ENCODE measurements at regions of chr7 and their contacts with region 1.

Region 1: GRCh38 chr7:138738551-138739335 is 37.6 kb upstream of the SVOPL start:
- DNase-seq: peak; percentile 74
- H3K4me3 ChIP-seq: no peak overlapping the region
- H3K27ac ChIP-seq: no peak overlapping the region
- H3K4me1 ChIP-seq: peaks cover 16% of the 10 kb centered on the region
- H3K27me3 ChIP-seq: no peaks in the 10 kb centered on the region
- CTCF ChIP-seq: peak; percentile 92 to 98

Region 2: DNA sequence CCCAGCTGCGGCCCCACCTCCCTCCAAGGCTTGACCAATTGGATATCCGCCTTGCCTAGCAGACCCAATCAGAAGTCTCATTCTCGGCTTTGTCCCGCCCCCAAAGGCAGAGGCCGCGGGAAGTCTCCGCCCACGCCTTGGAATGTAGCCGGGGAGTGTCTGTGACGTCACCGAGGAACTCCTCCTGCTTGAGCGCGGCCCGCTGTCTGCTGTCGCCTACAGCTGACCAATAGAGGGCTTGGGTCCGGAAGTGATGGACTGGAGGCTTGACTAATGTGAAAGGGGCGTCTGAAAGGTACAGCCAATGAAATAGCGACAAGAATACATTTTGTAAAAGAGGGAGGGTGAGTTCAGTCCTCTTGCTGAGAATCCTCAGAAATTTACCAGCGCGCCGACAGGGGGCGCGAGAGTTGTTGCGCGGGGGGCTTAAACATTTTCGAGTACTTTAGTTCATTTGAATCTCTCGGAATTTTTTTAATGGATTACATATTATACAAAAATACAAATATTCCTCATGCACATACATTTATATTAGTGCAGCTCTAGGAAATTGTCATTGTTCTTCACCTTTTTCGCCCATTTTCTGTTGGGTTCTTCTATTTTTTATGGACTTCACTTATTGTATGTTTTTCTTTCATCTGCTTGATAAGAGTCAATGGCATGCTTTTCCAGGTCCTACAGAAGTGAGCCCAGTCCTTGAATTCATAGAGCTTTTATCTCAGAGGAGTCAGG is 736.5 kb before region 1 on chr7:
- CTCF ChIA-PET with region 1: no interaction called
- dilution Hi-C with region 1: no loop called
- in situ Hi-C with region 1: loop called in 1 of 2 experiments (anchors 25 kb)
- intact Hi-C with region 1: no loop called
- DNase-seq: peak; percentile 100
- H3K4me3 ChIP-seq: peak overlapping the region; percentile 91 to 98 (median 94)
- H3K27ac ChIP-seq: peak overlapping the region; percentile 87
- H3K4me1 ChIP-seq: peaks cover 25% of the 10 kb centered on the region
- H3K27me3 ChIP-seq: no peaks in the 10 kb centered on the region
- CTCF ChIP-seq: peak; percentile 79 to 81

Region 3: DNA sequence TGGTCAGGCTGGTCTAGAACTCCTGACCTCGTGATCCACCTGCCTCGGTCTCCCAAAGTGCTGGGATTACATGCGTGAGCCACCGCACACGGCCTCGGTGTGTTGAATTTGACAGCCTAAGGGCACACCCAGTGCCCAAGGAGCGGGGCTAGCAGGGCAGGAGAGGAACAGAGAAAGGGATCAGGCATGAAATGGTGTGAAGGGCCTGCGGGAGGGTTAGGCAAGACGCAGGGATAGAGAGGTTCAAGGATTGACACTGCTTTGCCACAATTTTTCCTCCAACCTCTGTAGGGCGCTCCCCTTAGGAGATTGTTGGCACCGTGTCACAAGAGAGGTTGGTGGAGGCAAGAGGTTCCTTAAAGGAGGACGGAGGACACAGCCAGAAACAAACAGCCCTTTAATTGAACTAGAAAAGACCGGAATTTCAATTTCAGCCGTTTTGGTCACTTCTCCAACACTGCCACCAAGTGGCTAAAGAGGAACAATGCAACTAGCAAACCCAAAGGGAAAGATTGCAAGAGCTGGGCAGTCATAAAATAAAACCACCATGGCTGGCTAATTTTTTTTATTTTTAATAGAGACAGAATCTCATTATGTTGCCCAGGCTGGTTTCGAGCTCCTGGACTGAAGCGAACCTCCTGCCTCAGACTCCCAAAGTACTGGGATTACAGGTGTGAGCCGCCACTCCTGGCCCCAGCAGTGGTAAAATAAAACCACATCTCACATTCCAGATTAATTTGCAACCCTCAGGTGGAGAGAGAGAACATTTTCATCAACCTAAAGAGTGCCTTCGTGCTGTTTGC is 730.0 kb before region 1 on chr7:
- CTCF ChIA-PET with region 1: no interaction called
- dilution Hi-C with region 1: no loop called
- in situ Hi-C with region 1: loop called in 1 of 2 experiments (anchors 25 kb)
- intact Hi-C with region 1: loop called (anchors 1 kb)
- DNase-seq: peak; percentile 53
- H3K4me3 ChIP-seq: no peak overlapping the region
- H3K27ac ChIP-seq: no peak overlapping the region
- H3K4me1 ChIP-seq: no peaks in the 10 kb centered on the region
- H3K27me3 ChIP-seq: no peaks in the 10 kb centered on the region
- CTCF ChIP-seq: peak; percentile 69 to 86

Region 4: DNA sequence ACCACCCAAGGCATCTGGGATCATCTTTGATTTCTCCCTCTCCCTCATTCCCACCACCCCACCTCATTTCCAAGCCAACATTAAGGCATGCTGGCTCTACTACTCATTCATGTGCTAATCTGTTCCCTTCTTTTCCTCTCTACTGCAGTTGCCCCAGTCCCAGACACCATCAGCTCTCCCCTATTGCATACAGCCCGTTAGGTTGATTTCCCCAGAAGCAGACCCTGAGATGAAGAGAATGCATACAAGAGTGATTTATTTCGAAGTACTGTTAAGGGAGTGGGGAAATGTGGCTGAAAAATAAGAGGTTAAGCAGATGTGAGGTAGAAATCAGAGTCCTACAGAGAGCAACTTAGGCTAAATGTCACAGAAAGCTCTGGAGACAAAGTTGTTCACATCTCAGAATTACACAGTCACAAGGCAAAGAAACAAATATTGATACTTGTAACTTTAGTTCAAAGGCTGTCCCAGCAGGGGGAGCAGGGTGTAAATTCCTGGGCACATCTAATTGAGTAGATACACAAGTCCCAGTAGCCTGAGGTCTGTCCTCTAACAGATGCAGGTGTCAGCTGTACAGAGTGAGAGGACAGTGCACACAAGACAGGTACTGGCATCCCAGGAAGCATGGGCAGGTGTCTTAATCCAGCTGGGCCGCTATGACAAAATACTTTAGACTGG is 641.5 kb before region 1 on chr7:
- CTCF ChIA-PET with region 1: no interaction called
- dilution Hi-C with region 1: no loop called
- in situ Hi-C with region 1: no loop called
- intact Hi-C with region 1: loop called (anchors 1 kb)
- DNase-seq: peak; percentile 29
- H3K4me3 ChIP-seq: no peak overlapping the region
- H3K27ac ChIP-seq: no peak overlapping the region
- H3K4me1 ChIP-seq: no peaks in the 10 kb centered on the region
- H3K27me3 ChIP-seq: no peaks in the 10 kb centered on the region
- CTCF ChIP-seq: peak; percentile 47 to 57

Region 5: GRCh38 chr7:138161600-138162081 is 577.1 kb before region 1 on chr7:
- CTCF ChIA-PET with region 1: interaction called, 28 read pairs
- dilution Hi-C with region 1: no loop called
- in situ Hi-C with region 1: loop called (anchors 10 to 25 kb)
- intact Hi-C with region 1: loop called (anchors 1 kb)
- DNase-seq: peak; percentile 77
- H3K4me3 ChIP-seq: no peak overlapping the region
- H3K27ac ChIP-seq: no peak overlapping the region
- H3K4me1 ChIP-seq: no peaks in the 10 kb centered on the region
- H3K27me3 ChIP-seq: no peaks in the 10 kb centered on the region
- CTCF ChIP-seq: peak; percentile 55 to 87

Region 6: DNA sequence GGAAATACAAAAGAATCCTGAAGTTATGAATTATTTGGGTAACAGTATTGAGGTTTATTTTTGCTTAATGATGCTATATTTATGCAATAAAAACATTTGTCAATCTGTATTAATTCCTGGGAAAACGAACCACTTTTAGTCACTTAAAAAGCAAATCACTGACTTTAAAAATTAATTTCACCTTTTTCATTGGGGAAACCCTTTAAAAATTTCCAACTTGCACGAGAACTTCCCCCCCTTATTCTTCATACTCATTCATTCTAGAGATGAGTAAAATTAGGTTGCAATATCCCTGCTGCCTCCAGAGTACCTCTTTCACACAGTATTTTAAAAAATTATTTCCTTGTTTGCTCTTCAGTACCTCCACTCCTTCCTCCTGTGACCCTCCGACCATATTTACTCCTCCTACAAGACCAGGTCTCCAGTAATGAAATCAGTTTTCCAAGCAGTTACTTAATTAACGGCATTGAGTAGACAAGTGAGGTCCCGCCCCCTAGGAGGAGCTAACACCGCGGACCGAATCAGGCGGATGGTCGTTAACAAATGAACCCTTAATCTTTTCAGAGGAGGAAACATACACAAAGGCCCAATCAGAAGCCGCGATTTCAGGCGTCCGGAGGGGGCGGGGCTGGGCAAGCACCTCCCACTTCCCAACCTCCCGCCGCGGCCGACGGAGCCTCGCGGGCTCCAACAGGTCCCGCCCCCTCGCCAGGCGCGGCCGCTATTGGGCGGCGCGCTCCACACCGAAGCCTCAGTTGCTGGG is 279.1 kb before region 1 on chr7:
- CTCF ChIA-PET with region 1: no interaction called
- dilution Hi-C with region 1: no loop called
- in situ Hi-C with region 1: no loop called
- intact Hi-C with region 1: loop called (anchors 1 kb)
- DNase-seq: peak; percentile 97
- H3K4me3 ChIP-seq: peak overlapping the region; percentile 42 to 51 (median 50)
- H3K27ac ChIP-seq: no peak overlapping the region
- H3K4me1 ChIP-seq: peaks cover 7% of the 10 kb centered on the region
- H3K27me3 ChIP-seq: no peaks in the 10 kb centered on the region
- CTCF ChIP-seq: no peak

Region 7: DNA sequence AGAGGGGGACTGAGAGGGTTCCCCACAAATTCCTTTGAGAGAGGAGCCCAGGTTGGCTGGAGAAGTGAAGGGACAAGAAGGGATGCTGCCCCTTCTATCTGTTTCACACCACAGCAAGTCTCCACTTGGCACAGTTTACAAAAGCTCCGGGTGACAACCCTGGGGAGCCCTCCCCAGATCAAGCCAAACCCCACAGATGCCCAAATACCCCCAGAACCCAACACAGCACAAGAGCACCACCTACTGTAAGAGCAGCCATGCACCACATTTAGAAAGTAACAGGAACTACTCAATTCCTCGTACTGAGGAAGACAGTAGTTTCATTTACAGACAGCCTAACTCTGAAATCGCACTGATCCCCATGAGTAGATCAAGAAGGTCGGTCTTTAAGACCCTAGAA is 127.1 kb after region 1 on chr7:
- CTCF ChIA-PET with region 1: no interaction called
- dilution Hi-C with region 1: no loop called
- in situ Hi-C with region 1: no loop called
- intact Hi-C with region 1: loop called (anchors 5 kb)
- DNase-seq: no peak
- H3K4me3 ChIP-seq: no peak overlapping the region
- H3K27ac ChIP-seq: no peak overlapping the region
- H3K4me1 ChIP-seq: peaks cover 7% of the 10 kb centered on the region
- H3K27me3 ChIP-seq: no peaks in the 10 kb centered on the region
- CTCF ChIP-seq: peak; percentile 37 to 69

Region 8: GRCh38 chr7:139340037-139340807 is 601.5 kb after region 1 on chr7:
- CTCF ChIA-PET with region 1: no interaction called
- dilution Hi-C with region 1: no loop called
- in situ Hi-C with region 1: no loop called
- intact Hi-C with region 1: no loop called
- DNase-seq: peak; percentile 99
- H3K4me3 ChIP-seq: peak overlapping the region; percentile 73 to 90 (median 87)
- H3K27ac ChIP-seq: peak overlapping the region; percentile 99
- H3K4me1 ChIP-seq: peaks cover 7% of the 10 kb centered on the region
- H3K27me3 ChIP-seq: no peaks in the 10 kb centered on the region
- CTCF ChIP-seq: peak; percentile 59 to 74